PC-9 (cell line): ENCODE measurements at regions of chr21 and their contacts with region 1.

Region 1: GRCh38 chr21:21232320-21232719 is 234.1 kb downstream of the NCAM2 start:
- DNase-seq: no peak
- H3K4me3 ChIP-seq: no peak overlapping the region
- H3K27ac ChIP-seq: no peak overlapping the region
- H3K4me1 ChIP-seq: no peaks in the 10 kb centered on the region
- H3K27me3 ChIP-seq: no peaks in the 10 kb centered on the region
- CTCF ChIP-seq: peak; percentile 45; the same call in 1 of the 2 replicates

Region 2: GRCh38 chr21:21137986-21138385 is 94.3 kb before region 1 on chr21:
- CTCF ChIA-PET with region 1: no interaction called
- POLR2A ChIA-PET with region 1: no interaction called
- intact Hi-C with region 1: no loop called
- DNase-seq: no peak
- H3K4me3 ChIP-seq: no peak overlapping the region
- H3K27ac ChIP-seq: no peak overlapping the region
- H3K4me1 ChIP-seq: no peaks in the 10 kb centered on the region
- H3K27me3 ChIP-seq: no peaks in the 10 kb centered on the region
- CTCF ChIP-seq: no peak

Region 3: GRCh38 chr21:21196087-21196486 is 36.2 kb before region 1 on chr21:
- CTCF ChIA-PET with region 1: no interaction called
- POLR2A ChIA-PET with region 1: no interaction called
- intact Hi-C with region 1: no loop called
- DNase-seq: no peak
- H3K4me3 ChIP-seq: no peak overlapping the region
- H3K27ac ChIP-seq: no peak overlapping the region
- H3K4me1 ChIP-seq: no peaks in the 10 kb centered on the region
- H3K27me3 ChIP-seq: no peaks in the 10 kb centered on the region
- CTCF ChIP-seq: no peak

Region 4: DNA sequence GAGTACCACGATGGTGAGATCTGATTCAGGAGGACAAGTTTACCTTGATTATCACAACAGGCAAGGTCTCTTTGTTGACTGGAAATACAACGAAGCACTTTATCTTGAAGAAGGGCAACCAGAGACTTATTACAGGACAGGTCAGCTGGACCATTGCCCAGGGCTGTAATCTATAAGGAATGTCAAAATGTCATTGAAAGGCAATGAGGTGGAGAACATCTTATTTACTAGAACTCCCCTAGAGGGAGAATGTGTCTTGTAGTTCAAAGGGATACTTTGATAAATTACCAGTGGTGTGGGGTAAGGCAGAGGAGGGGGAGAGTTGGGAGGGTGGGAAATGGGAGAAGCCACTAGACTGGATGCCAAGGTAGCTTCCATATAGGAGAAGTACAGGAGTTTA is 21.8 kb before region 1 on chr21:
- CTCF ChIA-PET with region 1: no interaction called
- POLR2A ChIA-PET with region 1: no interaction called
- intact Hi-C with region 1: loop called (anchors 2 kb)
- DNase-seq: no peak
- H3K4me3 ChIP-seq: no peak overlapping the region
- H3K27ac ChIP-seq: no peak overlapping the region
- H3K4me1 ChIP-seq: no peaks in the 10 kb centered on the region
- H3K27me3 ChIP-seq: no peaks in the 10 kb centered on the region
- CTCF ChIP-seq: no peak

Region 5: GRCh38 chr21:21309510-21309909 is 77.2 kb after region 1 on chr21:
- CTCF ChIA-PET with region 1: no interaction called
- POLR2A ChIA-PET with region 1: no interaction called
- intact Hi-C with region 1: no loop called
- DNase-seq: no peak
- H3K4me3 ChIP-seq: no peak overlapping the region
- H3K27ac ChIP-seq: no peak overlapping the region
- H3K4me1 ChIP-seq: no peaks in the 10 kb centered on the region
- H3K27me3 ChIP-seq: no peaks in the 10 kb centered on the region
- CTCF ChIP-seq: no peak

Region 6: GRCh38 chr21:21396424-21396823 is 164.1 kb after region 1 on chr21:
- CTCF ChIA-PET with region 1: no interaction called
- POLR2A ChIA-PET with region 1: no interaction called
- intact Hi-C with region 1: no loop called
- DNase-seq: no peak
- H3K4me3 ChIP-seq: no peak overlapping the region
- H3K27ac ChIP-seq: no peak overlapping the region
- H3K4me1 ChIP-seq: no peaks in the 10 kb centered on the region
- H3K27me3 ChIP-seq: no peaks in the 10 kb centered on the region
- CTCF ChIP-seq: no peak

Region 7: GRCh38 chr21:21688875-21689274 is 456.6 kb after region 1 on chr21:
- CTCF ChIA-PET with region 1: no interaction called
- POLR2A ChIA-PET with region 1: no interaction called
- intact Hi-C with region 1: loop called (anchors 10 kb)
- DNase-seq: no peak
- H3K4me3 ChIP-seq: no peak overlapping the region
- H3K27ac ChIP-seq: no peak overlapping the region
- H3K4me1 ChIP-seq: no peaks in the 10 kb centered on the region
- H3K27me3 ChIP-seq: no peaks in the 10 kb centered on the region
- CTCF ChIP-seq: no peak